K562 (cell line): ENCODE measurements at regions of chr4 and their contacts with region 1.

Region 1: GRCh38 chr4:56799824-56800756 is 21.4 kb downstream of the SPINK2 start:
- DNase-seq: peak; percentile 58 to 84 (median 68)
- ATAC-seq: peak; percentile 99
- H3K4me3 ChIP-seq: peak overlapping the region; percentile 61
- H3K27ac ChIP-seq: no peak overlapping the region
- H3K4me1 ChIP-seq: no peaks in the 10 kb centered on the region
- H3K27me3 ChIP-seq: peaks cover 3 to 6% of the 10 kb centered on the region in 2 experiments; a peak in 3 of 5 replicates
- CTCF ChIP-seq: peak; percentile 89 to 95 (median 91)
- EP300 ChIP-seq: no peak
- POLR2A ChIP-seq: no peak
- RAD21 ChIP-seq: peak; percentile 91 to 92

Region 2: DNA sequence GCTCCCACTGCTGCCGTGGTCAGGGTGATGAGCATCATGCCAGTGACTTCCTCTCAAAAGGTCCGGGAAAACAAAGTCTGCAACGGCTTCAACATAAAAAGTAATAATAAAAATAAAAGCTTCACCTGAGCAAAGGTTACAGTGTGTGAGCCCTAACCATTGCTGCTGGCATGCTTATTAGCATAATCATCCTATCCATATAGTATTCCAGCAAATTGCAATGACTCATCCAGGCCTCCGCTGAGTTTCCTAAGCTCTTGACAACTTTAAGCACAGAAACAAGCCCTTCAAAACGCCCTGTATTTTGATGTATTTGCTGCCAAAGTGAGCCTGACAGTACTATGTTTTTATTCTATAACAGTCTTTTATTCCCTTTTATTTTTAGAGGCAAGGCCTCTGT is 513.3 kb before region 1 on chr4:
- CTCF ChIA-PET with region 1: no interaction called
- POLR2A ChIA-PET with region 1: no interaction called
- in situ Hi-C with region 1: no loop called
- intact Hi-C with region 1: no loop called
- DNase-seq: no peak
- ATAC-seq: no peak
- H3K4me3 ChIP-seq: no peak overlapping the region
- H3K27ac ChIP-seq: no peak overlapping the region
- H3K4me1 ChIP-seq: no peaks in the 10 kb centered on the region
- H3K27me3 ChIP-seq: peaks cover 12 to 13% of the 10 kb centered on the region in 2 experiments; a peak in 3 of 5 replicates
- CTCF ChIP-seq: no peak
- EP300 ChIP-seq: no peak
- POLR2A ChIP-seq: no peak
- RAD21 ChIP-seq: no peak

Region 3: GRCh38 chr4:56575820-56576429 is 224.2 kb before region 1 on chr4:
- CTCF ChIA-PET with region 1: no interaction called
- POLR2A ChIA-PET with region 1: interaction called, 4 read pairs
- in situ Hi-C with region 1: no loop called
- intact Hi-C with region 1: loop called (anchors 10 kb)
- DNase-seq: peak in 2 of 4 experiments; percentile 10 to 21
- ATAC-seq: peak; percentile 63
- H3K4me3 ChIP-seq: no peak overlapping the region
- H3K27ac ChIP-seq: no peak overlapping the region
- H3K4me1 ChIP-seq: no peaks in the 10 kb centered on the region
- H3K27me3 ChIP-seq: no peaks in the 10 kb centered on the region
- CTCF ChIP-seq: peak; percentile 21 to 43 (median 25); a peak in 3 of 6 replicates
- EP300 ChIP-seq: no peak
- POLR2A ChIP-seq: no peak
- RAD21 ChIP-seq: peak in 1 of 2 experiments; percentile 36; a peak in 2 of 4 replicates

Region 4: DNA sequence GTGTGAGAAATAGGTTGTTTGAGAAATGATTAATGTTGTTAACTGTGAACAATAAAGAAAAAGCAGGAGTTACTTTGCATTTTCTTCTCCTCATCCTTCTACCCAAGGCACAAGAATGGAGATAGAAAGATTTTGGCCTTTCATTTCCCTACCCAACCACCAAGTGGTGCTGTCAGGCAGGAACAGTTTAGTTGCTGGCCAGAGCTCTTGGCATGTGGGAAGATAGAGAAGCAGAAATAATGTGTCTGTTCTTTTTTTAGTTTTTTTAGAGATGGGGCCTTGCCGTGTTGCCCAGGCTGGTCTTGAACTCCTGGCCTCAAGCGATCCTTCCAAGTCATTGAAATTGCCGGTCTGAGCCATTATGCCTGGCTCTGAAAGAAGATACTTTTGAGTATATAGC is 131.8 kb before region 1 on chr4:
- CTCF ChIA-PET with region 1: interaction called, 10 read pairs
- POLR2A ChIA-PET with region 1: no interaction called
- in situ Hi-C with region 1: no loop called
- intact Hi-C with region 1: loop called (anchors 1 kb)
- DNase-seq: peak in 2 of 4 experiments; percentile 14 to 25
- ATAC-seq: peak; percentile 63; the same call in 2 of the 3 replicates
- H3K4me3 ChIP-seq: no peak overlapping the region
- H3K27ac ChIP-seq: no peak overlapping the region
- H3K4me1 ChIP-seq: no peaks in the 10 kb centered on the region
- H3K27me3 ChIP-seq: peaks cover 0 to 5% of the 10 kb centered on the region in 2 experiments; a peak in 2 of 5 replicates
- CTCF ChIP-seq: peak; percentile 45 to 65 (median 54); a peak in 5 of 6 replicates
- EP300 ChIP-seq: no peak
- POLR2A ChIP-seq: no peak
- RAD21 ChIP-seq: peak; percentile 62 to 65